CD8-positive, alpha-beta memory T cell (primary cell): ENCODE measurements at regions of chr9 and their contacts with region 1.

Region 1: DNA sequence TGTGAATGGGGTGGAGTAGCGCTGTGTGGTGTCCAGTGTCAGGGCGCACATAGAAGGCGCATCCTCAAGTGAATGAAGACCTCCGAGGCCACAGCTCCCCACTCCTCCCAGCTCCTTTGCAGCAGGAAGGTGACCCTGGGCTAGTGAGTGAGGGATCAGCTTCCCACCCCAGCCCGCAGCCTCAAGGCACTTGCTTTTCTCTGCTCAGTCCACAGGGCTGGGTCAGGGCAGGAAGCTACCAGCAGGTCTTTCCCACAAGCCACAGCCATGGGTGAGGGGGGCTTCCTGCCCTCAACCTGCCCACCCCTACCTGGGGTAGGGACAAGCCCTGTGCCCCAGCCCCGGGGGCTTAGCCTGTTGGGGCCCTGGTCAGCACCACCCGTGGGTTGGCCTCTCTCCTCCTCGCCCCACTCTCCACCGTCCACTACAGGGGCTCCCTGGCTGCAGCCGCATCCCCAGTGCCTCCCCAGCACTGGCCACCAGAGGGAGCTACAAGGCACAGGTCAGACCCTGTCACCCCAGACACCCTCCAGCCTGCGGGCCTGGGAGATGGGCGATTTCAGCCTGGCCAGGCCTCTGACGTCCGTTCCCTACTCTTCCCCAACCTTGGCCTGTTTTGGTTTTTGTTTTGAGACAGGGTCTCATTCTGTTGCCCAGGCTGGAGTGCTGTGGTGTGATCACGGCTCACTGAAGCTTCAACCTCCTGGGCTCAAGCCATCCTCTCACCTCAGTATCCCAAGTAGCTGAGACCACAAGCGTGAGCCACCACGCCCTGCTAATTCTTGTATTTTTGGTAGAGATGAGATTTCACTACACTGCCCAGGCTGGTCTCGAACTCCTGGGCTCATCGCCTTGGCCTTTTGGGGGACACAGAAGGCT is 1.3 kb upstream of the ABCA2 start:
- DNase-seq: peak; percentile 58 to 76 (median 60)
- H3K4me3 ChIP-seq: peak overlapping the region; percentile 74
- H3K4me3 Mint-ChIP-seq: peak overlapping the region; percentile 82 to 95 (median 88)
- H3K27ac ChIP-seq: peak overlapping the region; percentile 61
- H3K27ac Mint-ChIP-seq: peak overlapping the region; percentile 58 to 96 (median 90)
- H3K4me1 ChIP-seq: peaks cover 55% of the 10 kb centered on the region
- H3K4me1 Mint-ChIP-seq: peaks cover 43 to 73% (median 44%) of the 10 kb centered on the region in 3 donors
- H3K27me3 ChIP-seq: no peaks in the 10 kb centered on the region
- H3K27me3 Mint-ChIP-seq: no peaks in the 10 kb centered on the region

Region 2: DNA sequence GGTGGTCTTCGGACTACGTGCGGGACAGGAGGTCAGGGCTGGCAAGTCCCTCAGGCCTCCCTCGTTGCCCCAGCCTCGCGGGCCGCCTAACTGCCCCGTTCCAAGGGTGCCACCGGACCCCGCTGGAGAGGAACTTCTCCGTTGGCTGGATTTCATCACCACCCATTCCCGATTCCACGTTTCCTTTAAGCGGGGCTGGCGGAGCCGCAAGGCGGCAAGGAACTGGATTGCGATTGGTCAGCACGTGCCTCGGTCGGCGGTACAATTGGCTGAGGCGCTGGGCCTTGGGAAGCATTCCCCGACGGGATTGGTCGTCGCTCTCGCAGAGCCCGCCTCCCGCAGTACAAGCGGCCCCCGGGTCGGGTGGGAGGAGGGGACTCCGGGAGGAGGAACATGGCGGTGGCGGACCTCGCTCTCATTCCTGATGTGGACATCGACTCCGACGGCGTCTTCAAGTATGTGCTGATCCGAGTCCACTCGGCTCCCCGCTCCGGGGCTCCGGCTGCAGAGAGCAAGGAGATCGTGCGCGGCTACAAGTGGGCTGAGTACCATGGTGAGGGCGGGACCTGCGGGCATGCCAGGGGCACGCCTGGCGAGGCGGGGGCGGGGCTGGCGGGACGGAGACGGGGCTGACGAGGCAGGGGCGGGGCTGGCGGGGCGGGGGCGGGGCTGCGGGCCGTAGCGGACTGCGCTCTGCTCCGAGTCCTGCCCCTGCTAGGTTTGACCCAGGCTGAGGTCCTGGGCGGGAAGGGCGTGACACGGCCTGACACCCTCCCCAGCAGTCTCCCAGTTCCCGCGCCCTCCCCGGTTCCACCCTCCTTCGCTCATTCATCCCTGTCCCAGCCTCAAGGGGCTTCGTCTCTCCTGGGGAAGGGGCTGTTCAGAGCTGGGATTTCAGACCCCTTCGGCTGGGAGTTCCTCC is 180.0 kb before region 1 on chr9 and contains the start of gene PHPT1:
- CTCF ChIA-PET with region 1: interaction called, 45 read pairs
- POLR2A ChIA-PET with region 1: no interaction called
- DNase-seq: peak; percentile 94 to 98 (median 96)
- H3K4me3 ChIP-seq: peak within 1 kb of the TSS; percentile 88
- H3K4me3 Mint-ChIP-seq: peak within 1 kb of the TSS; percentile 87 to 98 (median 90)
- H3K27ac ChIP-seq: peak within 1 kb of the TSS; percentile 81
- H3K27ac Mint-ChIP-seq: peak within 1 kb of the TSS; percentile 64 to 88 (median 84)
- H3K4me1 ChIP-seq: peaks cover 17% of the 10 kb centered on the region
- H3K4me1 Mint-ChIP-seq: peaks cover 0 to 27% (median 12%) of the 10 kb centered on the region in 3 donors
- H3K27me3 ChIP-seq: peaks cover 4% of the 10 kb centered on the region
- H3K27me3 Mint-ChIP-seq: peaks cover 8 to 21% of the 10 kb centered on the region in 2 donors
- total RNA-seq, gene PHPT1: 108 to 110 TPM

Region 3: DNA sequence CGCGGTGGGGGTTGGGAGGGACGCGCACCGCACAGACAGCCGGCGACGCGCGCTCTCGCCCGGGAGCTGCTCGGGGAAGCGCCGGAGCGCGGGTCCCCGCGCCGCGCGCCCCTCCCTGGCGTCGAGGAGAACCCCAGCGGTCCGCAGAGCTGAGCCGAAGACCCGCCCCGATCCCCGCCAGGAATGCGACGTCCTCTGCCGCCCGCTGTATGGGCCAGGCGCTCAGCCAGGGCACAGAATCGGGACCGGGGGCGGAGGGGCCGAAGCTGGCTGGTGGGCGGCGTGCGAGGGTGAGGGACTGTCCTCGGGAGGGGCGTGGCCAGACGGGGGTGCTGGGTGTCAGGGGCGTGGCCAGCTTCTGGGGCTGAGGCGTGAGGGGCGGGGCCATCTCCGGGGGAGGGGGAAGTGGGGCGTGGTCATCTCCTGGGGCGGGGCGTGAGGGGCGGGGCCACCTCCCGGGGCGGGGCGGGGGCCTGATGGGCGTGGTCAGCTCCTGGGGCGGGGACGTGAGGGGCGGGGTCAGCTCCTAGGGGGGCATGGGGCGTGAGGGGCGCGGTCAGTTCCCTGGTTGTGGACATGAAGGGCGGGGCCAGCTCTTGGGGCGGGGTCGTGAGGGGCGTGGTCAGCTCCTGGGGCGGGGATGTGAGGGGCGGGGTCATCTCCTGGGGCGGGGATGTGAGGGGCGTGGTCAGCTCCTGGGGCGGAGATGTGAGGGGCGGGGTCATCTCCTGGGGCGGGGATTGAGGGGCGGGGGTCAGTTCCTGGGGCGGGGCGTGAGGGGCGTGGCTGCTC is 51.0 kb before region 1 on chr9:
- CTCF ChIA-PET with region 1: interaction called, 17 read pairs
- POLR2A ChIA-PET with region 1: interaction called, 5 read pairs
- DNase-seq: peak; percentile 68 to 85 (median 79)
- H3K4me3 ChIP-seq: no peak overlapping the region
- H3K4me3 Mint-ChIP-seq: peak overlapping the region in 4 of 7 donors; percentile 52 to 66 (median 61)
- H3K27ac ChIP-seq: no peak overlapping the region
- H3K27ac Mint-ChIP-seq: no peak overlapping the region
- H3K4me1 ChIP-seq: peaks cover 26% of the 10 kb centered on the region
- H3K4me1 Mint-ChIP-seq: peaks cover 21 to 47% (median 24%) of the 10 kb centered on the region in 3 donors
- H3K27me3 ChIP-seq: no peaks in the 10 kb centered on the region
- H3K27me3 Mint-ChIP-seq: peaks cover 0 to 5% of the 10 kb centered on the region in 2 donors

Region 4: DNA sequence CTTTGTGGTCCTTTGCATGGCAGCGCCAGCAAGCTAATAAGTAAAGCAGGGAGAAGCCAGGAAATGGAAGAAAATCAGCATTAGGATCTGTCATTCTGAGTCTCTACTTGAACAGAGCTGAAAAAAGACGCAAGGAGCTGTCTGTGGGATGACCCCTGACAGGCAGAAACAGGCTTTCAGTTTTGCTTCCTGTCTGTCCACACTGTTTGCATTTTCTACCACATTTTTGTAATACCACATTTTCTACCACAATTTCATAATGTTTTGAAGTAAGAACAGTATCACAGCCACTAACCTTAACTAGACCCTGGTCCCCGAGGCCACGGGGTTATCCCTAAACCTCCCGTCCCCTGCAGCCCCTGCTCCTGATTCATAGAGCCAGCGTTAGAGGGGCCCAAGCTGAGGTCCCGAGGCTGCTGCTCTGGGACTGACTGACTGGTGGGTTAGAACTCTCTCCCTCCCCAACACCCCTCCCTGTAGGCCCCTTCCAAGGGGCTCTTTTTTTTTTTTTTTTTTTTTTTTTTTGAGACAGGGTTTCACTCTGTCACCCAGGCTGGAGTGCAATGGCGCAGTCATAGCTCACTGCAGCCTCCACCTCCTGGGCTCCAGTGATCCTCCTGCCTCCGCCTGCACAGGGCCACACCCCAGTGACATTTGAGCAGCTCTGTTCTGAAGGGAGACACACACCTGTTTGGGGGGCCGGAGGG is 29.0 kb before region 1 on chr9:
- CTCF ChIA-PET with region 1: interaction called, 72 read pairs
- POLR2A ChIA-PET with region 1: interaction called, 6 read pairs
- DNase-seq: peak in 2 of 5 donors; percentile 29 to 61
- H3K4me3 ChIP-seq: no peak overlapping the region
- H3K4me3 Mint-ChIP-seq: peak overlapping the region; percentile 62 to 93 (median 79)
- H3K27ac ChIP-seq: peak overlapping the region; percentile 43
- H3K27ac Mint-ChIP-seq: peak overlapping the region; percentile 84 to 96 (median 91)
- H3K4me1 ChIP-seq: peaks cover 46% of the 10 kb centered on the region
- H3K4me1 Mint-ChIP-seq: peaks cover 38 to 60% (median 40%) of the 10 kb centered on the region in 3 donors
- H3K27me3 ChIP-seq: no peaks in the 10 kb centered on the region
- H3K27me3 Mint-ChIP-seq: no peaks in the 10 kb centered on the region

Region 5: GRCh38 chr9:137046098-137046787 is 16.9 kb after region 1 on chr9 and contains the start of gene NPDC1:
- CTCF ChIA-PET with region 1: interaction called, 28 read pairs
- POLR2A ChIA-PET with region 1: no interaction called
- DNase-seq: peak; percentile 68 to 83 (median 71)
- H3K4me3 ChIP-seq: peak within 1 kb of the TSS; percentile 47
- H3K4me3 Mint-ChIP-seq: peak within 1 kb of the TSS; percentile 70 to 87 (median 86)
- H3K27ac ChIP-seq: peak within 1 kb of the TSS; percentile 24
- H3K27ac Mint-ChIP-seq: peak within 1 kb of the TSS in 4 of 8 donors; percentile 38 to 60 (median 44)
- H3K4me1 ChIP-seq: peaks cover 27% of the 10 kb centered on the region
- H3K4me1 Mint-ChIP-seq: peaks cover 6 to 26% (median 13%) of the 10 kb centered on the region in 3 donors
- H3K27me3 ChIP-seq: peaks cover 49% of the 10 kb centered on the region
- H3K27me3 Mint-ChIP-seq: peaks cover 28 to 35% of the 10 kb centered on the region in 2 donors
- total RNA-seq, gene NPDC1: 24.6 to 27.5 TPM

Region 6: DNA sequence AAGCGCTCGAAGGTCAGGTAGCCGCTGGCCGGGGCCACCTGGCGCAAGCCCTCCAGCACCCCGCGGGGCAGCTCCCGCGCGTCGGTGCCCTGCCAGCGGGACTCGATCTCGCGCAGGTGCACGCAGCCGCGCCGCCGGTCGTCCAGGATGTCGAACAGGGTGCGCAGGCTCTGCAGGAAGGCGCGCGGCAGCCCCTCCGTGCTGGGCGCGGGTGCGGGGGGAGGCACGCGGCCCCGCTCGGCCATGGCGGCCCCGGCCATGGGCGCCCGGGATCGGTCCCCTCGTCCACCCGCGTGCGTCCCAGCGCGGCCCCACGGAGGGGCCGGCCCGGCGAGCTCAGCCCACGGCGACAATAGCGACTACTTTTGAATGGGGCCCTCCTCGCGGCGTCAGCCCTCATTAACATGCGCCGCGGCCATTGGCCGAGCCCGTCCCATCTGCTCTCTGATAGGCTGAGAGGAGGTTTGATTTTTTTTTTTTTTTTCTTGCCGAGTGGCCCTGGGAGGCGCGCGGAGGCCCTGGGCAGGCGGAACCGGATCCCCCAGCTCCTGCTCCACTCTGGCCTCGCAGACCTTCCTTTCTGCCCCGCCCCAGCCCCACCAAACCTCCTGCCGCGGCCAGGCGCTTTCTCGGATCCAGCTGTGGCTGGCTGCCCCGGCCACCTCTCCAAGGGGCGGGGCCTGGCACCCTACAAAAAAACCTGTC is 41.1 kb after region 1 on chr9 and contains the start of gene SAPCD2:
- CTCF ChIA-PET with region 1: interaction called, 31 read pairs
- POLR2A ChIA-PET with region 1: interaction called, 3 read pairs
- DNase-seq: peak; percentile 80 to 91 (median 85)
- H3K4me3 ChIP-seq: peak within 1 kb of the TSS; percentile 39
- H3K4me3 Mint-ChIP-seq: peak within 1 kb of the TSS; percentile 66 to 88 (median 77)
- H3K27ac ChIP-seq: peak within 1 kb of the TSS; percentile 65
- H3K27ac Mint-ChIP-seq: peak within 1 kb of the TSS in 6 of 8 donors; percentile 43 to 89 (median 75)
- H3K4me1 ChIP-seq: peaks cover 14% of the 10 kb centered on the region
- H3K4me1 Mint-ChIP-seq: peaks cover 6 to 19% (median 12%) of the 10 kb centered on the region in 3 donors
- H3K27me3 ChIP-seq: no peaks in the 10 kb centered on the region
- H3K27me3 Mint-ChIP-seq: peaks cover 3 to 4% of the 10 kb centered on the region in 2 donors
- total RNA-seq, gene SAPCD2: 11.5 to 12.7 TPM